H1 (cell line): ENCODE measurements at regions of chr21 and their contacts with region 1.

Region 1: DNA sequence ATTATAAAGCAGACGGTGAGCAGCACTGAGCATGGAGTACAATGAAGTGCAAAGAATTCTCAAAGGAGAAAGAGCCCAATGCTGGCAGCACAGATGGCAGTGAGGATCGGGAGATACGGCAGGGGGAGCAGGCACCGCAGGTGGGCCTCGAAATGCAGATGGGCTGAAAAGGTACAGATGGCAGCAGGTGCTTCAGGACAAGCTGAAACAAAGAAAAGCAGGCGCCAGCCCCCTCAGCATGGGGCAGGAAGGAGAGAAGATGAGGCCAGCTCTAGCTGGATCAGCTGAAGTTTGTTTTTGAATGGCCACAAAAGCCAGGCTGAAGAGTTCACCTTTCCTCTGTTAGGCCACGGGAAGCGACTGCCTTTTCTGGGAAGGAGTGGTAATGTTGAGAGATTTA is 7.7 kb downstream of the CFAP298 start:
- DNase-seq: peak; percentile 73 to 78
- H3K4me3 ChIP-seq: peak overlapping the region in 2 of 4 experiments; percentile 10 to 42; a peak in 2 of 8 replicates
- H3K27ac ChIP-seq: peak overlapping the region; percentile 78
- H3K4me1 ChIP-seq: peaks cover 27 to 46% (median 32%) of the 10 kb centered on the region in 4 experiments
- H3K27me3 ChIP-seq: no peaks in the 10 kb centered on the region
- CTCF ChIP-seq: no peak
- EP300 ChIP-seq: peak in 1 of 2 experiments; percentile 86; a peak in 1 of 3 replicates
- POLR2A ChIP-seq: peak in 1 of 2 experiments; percentile 49; a peak in 1 of 3 replicates
- RAD21 ChIP-seq: 0 out of 4 replicates have a peak, but pooled peaks of 1 of the 2 experiments have one; percentile 3

Region 2: GRCh38 chr21:32359711-32360260 is 244.7 kb before region 1 on chr21:
- CTCF ChIA-PET with region 1: interaction called, 11 read pairs
- POLR2A ChIA-PET with region 1: no interaction called
- DNase-seq: no peak
- H3K4me3 ChIP-seq: no peak overlapping the region
- H3K27ac ChIP-seq: no peak overlapping the region
- H3K4me1 ChIP-seq: no peaks in the 10 kb centered on the region
- H3K27me3 ChIP-seq: no peaks in the 10 kb centered on the region
- CTCF ChIP-seq: peak in 1 of 3 experiments; percentile 2; a peak in 1 of 4 replicates
- EP300 ChIP-seq: no peak
- POLR2A ChIP-seq: no peak
- RAD21 ChIP-seq: no peak

Region 3: DNA sequence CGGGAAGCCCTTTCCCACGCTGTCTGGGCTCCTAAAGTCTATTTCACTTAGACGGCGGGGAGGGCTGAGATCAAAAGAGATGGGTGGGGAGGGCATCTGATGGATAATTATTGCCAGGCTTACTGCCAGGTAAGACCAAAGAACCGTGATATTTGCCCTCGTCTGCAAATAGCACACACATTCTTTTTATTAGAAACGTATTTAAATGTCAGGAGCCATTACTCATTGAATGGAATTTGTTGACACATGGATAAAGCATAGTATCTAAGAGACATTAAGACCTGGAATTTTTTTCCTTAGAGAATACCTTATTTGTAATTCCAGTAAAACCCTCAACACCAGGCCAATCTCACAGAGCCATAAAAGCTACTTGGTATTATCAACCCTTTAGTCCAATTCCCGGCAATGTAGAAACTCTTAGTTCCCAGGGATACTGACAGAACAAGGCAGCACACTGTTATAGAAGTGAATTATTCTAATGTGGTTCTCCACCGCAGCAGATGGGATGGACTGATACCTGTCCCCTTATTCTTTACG is 222.3 kb before region 1 on chr21:
- CTCF ChIA-PET with region 1: interaction called, 18 read pairs
- POLR2A ChIA-PET with region 1: interaction called, 3 read pairs
- DNase-seq: no peak
- H3K4me3 ChIP-seq: no peak overlapping the region
- H3K27ac ChIP-seq: no peak overlapping the region
- H3K4me1 ChIP-seq: peaks cover 0 to 2% (median 0%) of the 10 kb centered on the region in 4 experiments; a peak in 1 of 7 replicates
- H3K27me3 ChIP-seq: no peaks in the 10 kb centered on the region
- CTCF ChIP-seq: no peak
- EP300 ChIP-seq: no peak
- POLR2A ChIP-seq: no peak
- RAD21 ChIP-seq: no peak

Region 4: DNA sequence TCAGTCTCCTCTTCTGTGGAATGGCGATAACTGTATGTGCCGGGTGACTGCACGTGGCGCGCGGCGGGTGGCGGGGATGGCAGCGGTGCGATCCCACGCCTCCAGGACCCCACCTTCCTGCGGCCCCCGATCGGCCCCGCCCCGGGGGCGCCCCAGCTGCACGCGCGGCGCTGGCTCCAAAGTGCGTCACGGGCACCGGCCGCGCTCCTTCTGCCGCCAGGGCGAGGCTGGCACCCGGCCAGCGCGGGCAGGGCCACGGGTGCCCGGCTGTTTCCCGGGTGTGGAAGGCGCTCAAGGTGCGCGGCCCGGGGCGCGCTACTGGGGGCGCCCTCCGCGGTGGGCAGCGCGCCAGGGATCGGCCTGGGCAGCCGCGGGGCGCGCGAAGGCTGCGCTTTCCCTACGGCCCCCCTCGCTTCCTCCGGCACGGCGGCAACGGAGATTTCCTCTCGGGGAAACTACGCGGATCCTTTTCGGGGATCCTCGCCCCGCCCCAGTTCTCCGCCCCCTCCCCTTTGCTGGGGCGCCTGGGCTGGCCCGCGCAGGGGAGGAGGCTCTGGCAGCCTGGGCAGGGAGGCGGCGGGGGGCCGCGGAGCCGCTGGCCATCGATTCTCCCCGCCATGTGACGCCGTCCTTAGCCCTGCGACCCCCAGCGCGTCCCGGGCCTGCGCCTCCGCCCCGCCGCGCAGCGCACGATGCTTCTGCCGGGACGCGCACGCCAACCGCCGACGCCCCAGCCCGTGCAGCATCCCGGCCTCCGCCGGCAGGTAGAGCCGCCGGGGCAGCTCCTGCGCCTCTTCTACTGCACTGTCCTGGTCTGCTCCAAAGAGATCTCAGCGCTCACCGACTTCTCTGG is 192.1 kb before region 1 on chr21 and contains the start of gene EVA1C:
- CTCF ChIA-PET with region 1: interaction called, 18 read pairs
- POLR2A ChIA-PET with region 1: interaction called, 3 read pairs
- DNase-seq: peak in 1 of 2 experiments; percentile 79
- H3K4me3 ChIP-seq: peak within 1 kb of the TSS; percentile 24 to 63 (median 51)
- H3K27ac ChIP-seq: no peak within 1 kb of the TSS
- H3K4me1 ChIP-seq: peaks cover 3 to 26% (median 10%) of the 10 kb centered on the region in 4 experiments
- H3K27me3 ChIP-seq: peaks cover 18 to 57% (median 37%) of the 10 kb centered on the region in 4 experiments
- CTCF ChIP-seq: 0 out of 4 replicates have a peak, but pooled peaks of 1 of the 3 experiments have one; percentile 6
- EP300 ChIP-seq: no peak
- POLR2A ChIP-seq: no peak
- RAD21 ChIP-seq: peak in 1 of 2 experiments; percentile 14; a peak in 1 of 4 replicates
- total RNA-seq, gene EVA1C: 3.6 and 4.3 TPM in 2 replicates

Region 5: GRCh38 chr21:32569261-32570230 is 34.9 kb before region 1 on chr21:
- CTCF ChIA-PET with region 1: interaction called, 23 read pairs
- POLR2A ChIA-PET with region 1: interaction called, 3 read pairs
- DNase-seq: peak; percentile 50 to 89
- H3K4me3 ChIP-seq: peak overlapping the region; percentile 39 to 79 (median 74)
- H3K27ac ChIP-seq: no peak overlapping the region
- H3K4me1 ChIP-seq: peaks cover 0 to 7% (median 3%) of the 10 kb centered on the region in 4 experiments; a peak in 4 of 7 replicates
- H3K27me3 ChIP-seq: peaks cover 0 to 2% (median 0%) of the 10 kb centered on the region in 4 experiments; a peak in 1 of 7 replicates
- CTCF ChIP-seq: peak; percentile 77 to 97 (median 82)
- EP300 ChIP-seq: peak in 1 of 2 experiments; percentile 17; a peak in 1 of 3 replicates
- POLR2A ChIP-seq: peak in 1 of 2 experiments; percentile 31; a peak in 2 of 3 replicates
- RAD21 ChIP-seq: peak; percentile 67 to 74

Region 6: DNA sequence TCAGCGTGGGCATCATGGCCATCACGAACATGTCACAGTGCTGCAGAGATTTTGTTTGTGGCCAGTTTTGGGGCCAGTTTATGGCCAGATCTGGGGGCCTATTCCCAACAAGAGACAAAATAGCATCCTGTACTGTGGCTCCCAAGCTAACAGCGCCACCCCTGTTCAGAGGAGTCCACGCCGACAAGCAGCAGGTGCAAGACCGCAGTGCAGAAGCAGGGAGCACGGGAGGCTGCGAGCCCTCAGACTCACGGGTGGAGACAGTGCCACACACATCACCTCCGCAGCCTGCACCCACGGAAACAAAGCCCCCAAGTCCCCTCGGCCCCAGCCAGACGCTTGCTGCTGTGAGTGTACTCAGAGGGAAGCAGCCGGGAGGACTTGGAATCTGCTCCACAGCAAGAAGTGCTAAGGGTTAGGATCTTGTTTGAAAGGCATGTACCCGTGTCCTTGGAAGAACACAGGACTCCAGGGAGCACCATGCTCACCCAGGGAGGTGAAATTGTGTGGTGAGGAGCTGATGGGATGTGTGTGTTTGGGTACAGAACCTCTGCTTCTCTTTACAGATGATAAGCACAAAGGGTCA is 26.3 kb before region 1 on chr21:
- CTCF ChIA-PET with region 1: interaction called, 18 read pairs
- POLR2A ChIA-PET with region 1: interaction called, 3 read pairs
- DNase-seq: peak; percentile 23 to 70
- H3K4me3 ChIP-seq: no peak overlapping the region
- H3K27ac ChIP-seq: no peak overlapping the region
- H3K4me1 ChIP-seq: no peaks in the 10 kb centered on the region
- H3K27me3 ChIP-seq: no peaks in the 10 kb centered on the region
- CTCF ChIP-seq: peak; percentile 75 to 94 (median 79)
- EP300 ChIP-seq: no peak
- POLR2A ChIP-seq: no peak
- RAD21 ChIP-seq: peak; percentile 79 to 84